ENCODE measurements at regions of chr15 and their contacts with region 1.

Region 1: GRCh38 chr15:64527263-64527984 is 67.0 kb downstream of the ZNF609 start:
- DNase-seq: no peak
- ATAC-seq: no peak
- H3K4me3 ChIP-seq: no peak overlapping the region
- H3K27ac ChIP-seq: no peak overlapping the region
- H3K4me1 ChIP-seq: peaks cover 16% of the 10 kb centered on the region
- H3K27me3 ChIP-seq: no peaks in the 10 kb centered on the region
- CTCF ChIP-seq: no peak

Region 2: GRCh38 chr15:63834500-63835210 is 692.8 kb before region 1 on chr15:
- intact Hi-C with region 1: no loop called
- DNase-seq: no peak
- ATAC-seq: peak in 2 of 4 donors; percentile 9 to 11
- H3K4me3 ChIP-seq: peak overlapping the region; percentile 93
- H3K27ac ChIP-seq: peak overlapping the region; percentile 95
- H3K4me1 ChIP-seq: peaks cover 28% of the 10 kb centered on the region
- H3K27me3 ChIP-seq: no peaks in the 10 kb centered on the region
- CTCF ChIP-seq: no peak

Region 3: GRCh38 chr15:64443747-64444621 is 83.4 kb before region 1 on chr15:
- intact Hi-C with region 1: no loop called
- DNase-seq: no peak
- ATAC-seq: no peak
- H3K4me3 ChIP-seq: no peak overlapping the region
- H3K27ac ChIP-seq: no peak overlapping the region
- H3K4me1 ChIP-seq: no peaks in the 10 kb centered on the region
- H3K27me3 ChIP-seq: no peaks in the 10 kb centered on the region
- CTCF ChIP-seq: no peak

Region 4: DNA sequence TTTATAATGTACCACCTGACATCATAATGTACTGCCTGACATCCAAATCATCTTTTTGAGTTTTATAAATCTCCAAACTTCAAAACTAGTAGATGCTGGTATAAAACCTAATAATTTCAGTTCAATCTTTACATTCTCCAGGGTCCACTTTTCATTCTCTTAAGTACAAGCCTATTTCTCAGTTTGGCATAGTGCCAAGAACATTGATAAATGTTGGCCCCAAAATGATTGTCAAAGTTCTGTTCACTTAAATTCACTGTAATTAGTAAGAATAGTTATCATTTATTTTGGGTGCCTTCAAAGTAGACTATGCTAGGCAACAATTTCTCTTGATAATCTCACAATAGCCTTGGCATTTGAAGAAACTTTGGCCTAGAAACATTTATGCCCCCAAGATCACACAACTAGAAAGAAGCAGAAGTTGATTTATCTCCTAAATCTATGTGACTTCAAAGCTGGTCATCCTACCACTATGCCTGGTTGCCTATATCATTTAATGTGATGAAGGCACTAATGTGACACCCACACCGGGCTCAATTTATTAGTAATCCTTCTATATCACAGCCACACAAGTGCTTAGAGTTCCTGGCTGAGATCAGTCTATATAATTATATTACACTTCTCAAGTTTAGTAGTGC is 34.7 kb after region 1 on chr15:
- intact Hi-C with region 1: loop called in 1 of 2 experiments (anchors 5 kb)
- DNase-seq: no peak
- ATAC-seq: no peak
- H3K4me3 ChIP-seq: no peak overlapping the region
- H3K27ac ChIP-seq: no peak overlapping the region
- H3K4me1 ChIP-seq: peaks cover 11% of the 10 kb centered on the region
- H3K27me3 ChIP-seq: no peaks in the 10 kb centered on the region
- CTCF ChIP-seq: no peak

Region 5: DNA sequence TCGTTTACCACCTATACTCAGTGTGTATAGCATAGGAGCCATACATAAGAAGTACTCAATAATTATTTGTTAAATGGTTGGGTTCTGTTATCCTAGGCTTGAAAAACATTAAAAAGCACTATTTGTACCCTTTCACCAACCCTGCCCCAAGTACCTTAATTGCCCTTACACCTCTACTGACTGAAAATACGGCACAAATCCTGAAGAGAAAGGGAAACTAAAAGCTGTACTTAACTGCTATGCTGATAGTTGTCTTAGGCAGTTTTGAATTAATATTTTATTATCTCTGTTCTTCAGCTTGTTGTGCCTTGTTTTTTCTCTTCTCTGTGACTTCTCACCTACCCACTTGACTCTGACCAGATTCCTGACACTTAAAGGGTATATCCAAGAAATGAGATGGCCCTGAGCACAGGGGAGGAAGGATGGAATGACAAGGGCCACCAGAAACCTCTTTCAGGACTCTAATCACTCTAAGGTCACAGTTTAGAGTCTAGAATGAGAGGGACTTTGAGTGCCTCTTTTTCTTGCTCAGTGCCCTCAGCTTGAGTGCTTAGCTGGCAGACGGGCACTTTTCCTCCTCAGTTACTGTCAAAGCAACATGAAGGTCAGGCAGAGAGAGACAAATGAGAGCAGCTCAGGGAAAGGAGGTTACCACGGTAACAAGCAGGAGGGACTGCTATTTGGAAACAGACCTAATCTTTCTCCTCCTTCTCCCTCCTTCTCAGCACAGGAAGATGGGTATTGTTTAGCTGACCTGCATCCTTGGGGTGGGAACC is 69.5 kb after region 1 on chr15:
- intact Hi-C with region 1: no loop called
- DNase-seq: no peak
- ATAC-seq: peak in 1 of 4 donors; percentile 36
- H3K4me3 ChIP-seq: no peak overlapping the region
- H3K27ac ChIP-seq: no peak overlapping the region
- H3K4me1 ChIP-seq: peaks cover 8% of the 10 kb centered on the region
- H3K27me3 ChIP-seq: no peaks in the 10 kb centered on the region
- CTCF ChIP-seq: no peak